Activated CD4-positive, alpha-beta memory T cell treated with anti-CD3 and anti-CD28 coated beads for 36 hours (primary cell): ENCODE measurements at regions of chr14 and their contacts with region 1.

Region 1: GRCh38 chr14:69373104-69373503 is 25.0 kb downstream of the ERH start:
- DNase-seq: no peak
- H3K4me3 Mint-ChIP-seq: no peak overlapping the region
- H3K27ac Mint-ChIP-seq: peak overlapping the region; percentile 77
- H3K4me1 Mint-ChIP-seq: peaks cover 22% of the 10 kb centered on the region
- H3K27me3 Mint-ChIP-seq: no peaks in the 10 kb centered on the region

Region 2: DNA sequence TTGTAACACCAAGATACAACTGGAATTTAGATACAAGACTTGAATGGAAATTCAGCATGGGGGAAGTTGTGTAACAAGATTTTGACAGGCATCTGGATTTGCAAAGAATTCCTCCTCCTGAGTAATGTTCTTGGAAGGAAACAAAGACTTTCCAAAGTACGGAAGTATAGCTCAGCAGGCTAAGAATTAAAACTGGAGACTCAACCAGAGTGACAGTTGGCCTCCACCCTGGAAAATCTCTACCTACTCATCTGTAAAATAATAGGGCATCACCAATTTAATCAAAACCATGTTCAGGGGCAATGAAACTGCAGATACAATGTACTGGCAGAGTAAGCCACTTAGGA is 234.9 kb before region 1 on chr14:
- CTCF ChIA-PET with region 1: no interaction called
- POLR2A ChIA-PET with region 1: no interaction called
- intact Hi-C with region 1: no loop called
- DNase-seq: no peak
- H3K4me3 Mint-ChIP-seq: no peak overlapping the region
- H3K27ac Mint-ChIP-seq: no peak overlapping the region
- H3K4me1 Mint-ChIP-seq: peaks cover 55% of the 10 kb centered on the region
- H3K27me3 Mint-ChIP-seq: no peaks in the 10 kb centered on the region

Region 3: GRCh38 chr14:69358233-69358963 is 14.7 kb before region 1 on chr14:
- CTCF ChIA-PET with region 1: no interaction called
- POLR2A ChIA-PET with region 1: interaction called, 3 read pairs
- intact Hi-C with region 1: loop called (anchors 2 kb)
- DNase-seq: peak; percentile 84
- H3K4me3 Mint-ChIP-seq: no peak overlapping the region
- H3K27ac Mint-ChIP-seq: peak overlapping the region; percentile 33
- H3K4me1 Mint-ChIP-seq: peaks cover 45% of the 10 kb centered on the region
- H3K27me3 Mint-ChIP-seq: peaks cover 1% of the 10 kb centered on the region

Region 4: GRCh38 chr14:69685716-69686115 is 312.6 kb after region 1 on chr14:
- CTCF ChIA-PET with region 1: no interaction called
- POLR2A ChIA-PET with region 1: no interaction called
- intact Hi-C with region 1: no loop called
- DNase-seq: peak; percentile 80
- H3K4me3 Mint-ChIP-seq: peak overlapping the region; percentile 57
- H3K27ac Mint-ChIP-seq: peak overlapping the region; percentile 96
- H3K4me1 Mint-ChIP-seq: peaks cover 83% of the 10 kb centered on the region
- H3K27me3 Mint-ChIP-seq: no peaks in the 10 kb centered on the region